CD4-positive, alpha-beta T cell (primary cell): ENCODE measurements at regions of chr7 and their contacts with region 1.

Region 1: DNA sequence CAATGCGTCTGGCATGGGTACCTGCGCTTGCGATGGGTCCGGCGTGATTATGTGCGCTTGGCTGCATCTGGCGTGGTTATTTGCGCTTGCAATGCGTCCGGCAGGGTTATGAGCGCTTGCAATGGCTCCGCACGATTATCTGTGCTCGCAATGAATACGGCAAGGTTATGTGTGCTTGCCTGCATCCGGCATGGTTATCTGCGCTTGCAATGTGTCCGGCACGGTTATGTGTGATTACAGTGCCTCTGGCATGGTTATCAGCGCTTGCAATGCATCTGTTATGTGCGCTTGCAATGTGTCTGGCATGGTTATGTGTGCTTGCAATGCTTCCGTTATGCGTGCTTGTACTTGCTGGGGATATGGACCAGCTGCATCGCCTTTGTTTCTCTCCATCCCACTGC is 37.7 kb downstream of the RBAK start:
- DNase-seq: no peak
- ATAC-seq: no peak
- H3K4me3 ChIP-seq: no peak overlapping the region
- H3K4me3 Mint-ChIP-seq: no peak overlapping the region
- H3K27ac ChIP-seq: no peak overlapping the region
- H3K27ac Mint-ChIP-seq: no peak overlapping the region
- H3K4me1 ChIP-seq: peaks cover 6% of the 10 kb centered on the region
- H3K4me1 Mint-ChIP-seq: no peaks in the 10 kb centered on the region
- H3K27me3 ChIP-seq: peaks cover 0 to 7% of the 10 kb centered on the region in 2 experiments
- H3K27me3 Mint-ChIP-seq: no peaks in the 10 kb centered on the region
- CTCF ChIP-seq: no peak

Region 2: DNA sequence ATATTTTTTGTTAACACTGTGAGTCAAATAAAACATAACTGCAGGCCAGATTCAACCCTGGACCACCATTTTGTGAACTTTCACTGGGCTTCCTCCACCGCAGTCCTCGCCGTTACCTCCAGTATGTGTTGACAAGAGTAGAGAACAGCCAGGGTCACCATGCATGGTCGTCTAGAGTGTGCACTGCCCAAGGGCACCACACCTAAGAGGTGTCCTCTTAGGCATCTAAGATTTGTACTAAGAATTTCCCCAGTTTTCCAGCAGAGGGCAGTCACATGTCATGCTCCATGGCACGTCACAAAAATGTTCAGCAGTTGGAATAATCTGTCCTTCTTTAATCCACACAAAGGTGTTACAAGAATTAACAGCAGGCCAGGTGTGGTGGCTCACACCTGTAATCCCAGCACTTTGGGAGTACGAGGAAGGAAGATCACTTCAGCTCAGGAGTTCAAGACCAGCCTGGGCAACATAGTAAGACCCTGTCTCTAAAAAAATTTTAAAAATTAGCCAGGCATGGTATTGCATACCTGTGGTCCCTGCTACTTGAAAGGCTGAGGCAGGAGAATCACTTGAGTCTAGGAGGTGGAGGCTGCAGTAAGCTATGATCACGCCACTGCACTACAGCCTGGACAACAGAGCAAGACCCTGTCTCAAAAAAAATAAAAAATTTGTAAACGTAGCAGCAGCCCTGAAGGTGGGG is 472.4 kb before region 1 on chr7:
- CTCF ChIA-PET with region 1: interaction called, 4 read pairs
- POLR2A ChIA-PET with region 1: no interaction called
- intact Hi-C with region 1: loop called in 1 of 2 experiments (anchors 10 kb)
- DNase-seq: peak; percentile 23 to 84 (median 40)
- ATAC-seq: peak; percentile 91
- H3K4me3 ChIP-seq: no peak overlapping the region
- H3K4me3 Mint-ChIP-seq: no peak overlapping the region
- H3K27ac ChIP-seq: no peak overlapping the region
- H3K27ac Mint-ChIP-seq: no peak overlapping the region
- H3K4me1 ChIP-seq: peaks cover 12% of the 10 kb centered on the region
- H3K4me1 Mint-ChIP-seq: peaks cover 20% of the 10 kb centered on the region
- H3K27me3 ChIP-seq: no peaks in the 10 kb centered on the region
- H3K27me3 Mint-ChIP-seq: peaks cover 4% of the 10 kb centered on the region
- CTCF ChIP-seq: peak; percentile 84

Region 3: GRCh38 chr7:4797858-4798705 is 285.2 kb before region 1 on chr7:
- CTCF ChIA-PET with region 1: interaction called, 15 read pairs
- POLR2A ChIA-PET with region 1: interaction called, 3 read pairs
- intact Hi-C with region 1: loop called (anchors 1 to 2 kb)
- DNase-seq: peak in 13 of 14 experiments; percentile 45 to 83 (median 56)
- ATAC-seq: peak; percentile 96
- H3K4me3 ChIP-seq: no peak overlapping the region
- H3K4me3 Mint-ChIP-seq: no peak overlapping the region
- H3K27ac ChIP-seq: no peak overlapping the region
- H3K27ac Mint-ChIP-seq: no peak overlapping the region
- H3K4me1 ChIP-seq: peaks cover 4% of the 10 kb centered on the region
- H3K4me1 Mint-ChIP-seq: no peaks in the 10 kb centered on the region
- H3K27me3 ChIP-seq: no peaks in the 10 kb centered on the region
- H3K27me3 Mint-ChIP-seq: no peaks in the 10 kb centered on the region
- CTCF ChIP-seq: peak; percentile 94

Region 4: GRCh38 chr7:4830176-4830575 is 253.1 kb before region 1 on chr7:
- CTCF ChIA-PET with region 1: interaction called, 3 read pairs
- POLR2A ChIA-PET with region 1: no interaction called
- intact Hi-C with region 1: loop called (anchors 1 to 2 kb)
- DNase-seq: peak; percentile 18 to 77 (median 42)
- ATAC-seq: peak; percentile 89
- H3K4me3 ChIP-seq: no peak overlapping the region
- H3K4me3 Mint-ChIP-seq: no peak overlapping the region
- H3K27ac ChIP-seq: no peak overlapping the region
- H3K27ac Mint-ChIP-seq: no peak overlapping the region
- H3K4me1 ChIP-seq: peaks cover 4% of the 10 kb centered on the region
- H3K4me1 Mint-ChIP-seq: peaks cover 5% of the 10 kb centered on the region
- H3K27me3 ChIP-seq: no peaks in the 10 kb centered on the region
- H3K27me3 Mint-ChIP-seq: peaks cover 3% of the 10 kb centered on the region
- CTCF ChIP-seq: peak; percentile 71

Region 5: DNA sequence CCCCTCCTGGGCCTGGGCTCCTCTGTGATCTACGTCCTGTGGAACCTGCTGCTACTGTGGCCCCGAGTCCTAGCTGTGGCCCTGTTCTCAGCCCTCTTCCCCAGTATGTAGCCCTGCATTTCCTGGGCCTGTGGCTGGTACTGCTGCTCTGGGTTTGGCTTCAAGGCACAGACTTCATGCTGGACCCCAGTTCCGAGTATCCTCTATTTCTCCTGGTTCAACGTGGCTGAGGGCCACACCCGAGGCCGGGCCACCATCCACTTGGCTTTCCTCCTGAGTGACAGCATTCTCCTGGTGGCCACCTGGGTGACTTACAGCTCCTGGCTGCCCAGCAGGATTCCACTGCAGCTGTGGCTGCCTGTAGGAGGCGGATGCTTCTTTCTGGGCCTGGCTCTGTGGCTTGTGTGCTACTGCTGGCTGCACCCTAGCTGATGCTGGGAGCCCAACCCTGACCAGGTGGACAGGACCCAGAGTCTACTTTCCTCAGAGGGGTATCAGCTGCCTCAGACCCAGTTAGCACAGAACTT is 86.6 kb before region 1 on chr7:
- CTCF ChIA-PET with region 1: no interaction called
- POLR2A ChIA-PET with region 1: no interaction called
- intact Hi-C with region 1: no loop called
- DNase-seq: no peak
- ATAC-seq: no peak
- H3K4me3 ChIP-seq: no peak overlapping the region
- H3K4me3 Mint-ChIP-seq: no peak overlapping the region
- H3K27ac ChIP-seq: no peak overlapping the region
- H3K27ac Mint-ChIP-seq: no peak overlapping the region
- H3K4me1 ChIP-seq: no peaks in the 10 kb centered on the region
- H3K4me1 Mint-ChIP-seq: no peaks in the 10 kb centered on the region
- H3K27me3 ChIP-seq: no peaks in the 10 kb centered on the region
- H3K27me3 Mint-ChIP-seq: no peaks in the 10 kb centered on the region
- CTCF ChIP-seq: no peak